HEK293 (cell line): ENCODE measurements at regions of chr7 and their contacts with region 1.

Region 1: GRCh38 chr7:28096713-28097112 is 83.9 kb downstream of the JAZF1 start:
- H3K4me3 ChIP-seq: no peak overlapping the region
- H3K27ac ChIP-seq: no peak overlapping the region
- H3K4me1 ChIP-seq: no peaks in the 10 kb centered on the region
- CTCF ChIP-seq: no peak

Region 2: DNA sequence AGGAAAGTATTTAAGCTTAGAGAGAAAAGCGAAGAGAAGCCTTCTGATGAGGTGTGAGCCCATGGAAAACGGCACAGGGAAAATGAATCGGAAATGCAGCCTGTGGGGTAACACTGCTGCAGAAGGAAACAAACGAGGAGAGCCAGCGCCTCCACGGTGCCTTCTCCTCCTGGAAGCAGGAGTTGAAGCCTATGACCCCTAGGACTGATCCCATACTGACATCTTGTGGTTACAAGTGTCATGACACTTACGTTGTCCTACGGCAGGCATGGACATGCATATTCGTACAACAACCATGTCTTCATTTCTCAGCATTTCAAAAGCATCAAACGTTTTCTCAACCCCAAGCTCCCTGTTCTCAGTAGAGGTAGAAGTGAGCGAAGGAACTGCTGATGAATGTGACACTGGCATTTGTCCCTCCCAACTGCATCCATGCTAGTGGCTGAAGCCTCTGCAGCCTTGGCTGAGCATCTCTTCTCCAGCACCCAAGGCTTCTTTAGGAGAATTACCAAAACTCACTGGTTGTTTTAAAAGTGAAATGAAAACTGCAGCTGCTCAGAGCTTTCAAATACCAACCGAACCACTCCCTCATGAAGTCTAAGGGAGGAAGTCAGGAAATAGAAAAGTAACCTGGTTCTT is 76.3 kb before region 1 on chr7:
- CTCF ChIA-PET with region 1: interaction called, 66 read pairs
- POLR2A ChIA-PET with region 1: no interaction called
- H3K4me3 ChIP-seq: no peak overlapping the region
- H3K27ac ChIP-seq: no peak overlapping the region
- H3K4me1 ChIP-seq: peaks cover 5% of the 10 kb centered on the region; the same call in 1 of the 2 replicates
- CTCF ChIP-seq: peak; percentile 91

Region 3: GRCh38 chr7:28052933-28053332 is 43.8 kb before region 1 on chr7:
- CTCF ChIA-PET with region 1: interaction called, 32 read pairs
- POLR2A ChIA-PET with region 1: interaction called, 3 read pairs
- H3K4me3 ChIP-seq: no peak overlapping the region
- H3K27ac ChIP-seq: no peak overlapping the region
- H3K4me1 ChIP-seq: no peaks in the 10 kb centered on the region
- CTCF ChIP-seq: no peak

Region 4: DNA sequence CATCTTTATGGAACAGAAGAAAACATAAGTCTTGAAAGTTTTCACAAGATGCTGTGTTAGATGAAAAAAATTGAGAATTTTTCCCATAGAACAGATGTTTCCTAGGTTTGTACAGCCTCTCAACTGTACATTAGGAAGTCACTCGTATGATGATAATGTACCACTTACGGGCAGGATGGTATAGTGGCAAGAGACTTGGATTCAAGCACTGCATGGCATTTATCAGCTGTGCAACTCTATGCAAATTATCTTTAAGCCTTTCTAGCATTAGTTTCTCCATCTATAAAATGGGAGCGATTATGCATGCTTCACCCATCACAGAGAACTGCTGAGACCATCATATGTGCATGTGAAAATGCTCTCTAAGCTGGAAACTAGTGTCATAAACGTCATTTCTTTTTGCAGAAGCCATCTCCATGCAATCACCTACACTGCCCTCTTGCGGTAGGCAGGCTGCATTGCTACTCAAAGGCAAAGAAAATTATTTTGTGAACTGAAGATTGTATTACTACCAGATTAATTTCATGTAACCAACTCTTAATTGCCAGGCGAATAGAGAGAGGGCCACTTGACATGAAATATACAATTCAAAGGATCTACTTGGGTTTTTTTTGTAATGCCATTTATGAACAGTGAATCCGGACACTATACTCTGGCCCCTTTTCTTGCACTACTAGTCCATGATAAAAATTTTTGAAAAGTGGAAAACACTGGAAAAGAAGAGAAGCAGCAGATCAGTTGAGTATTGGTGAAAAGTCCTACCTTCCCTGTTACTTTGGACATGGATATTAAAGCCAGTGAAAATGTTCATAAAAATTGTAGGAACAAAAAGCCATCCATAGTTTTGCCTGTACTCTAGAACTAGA is 18.4 kb before region 1 on chr7:
- CTCF ChIA-PET with region 1: interaction called, 50 read pairs
- POLR2A ChIA-PET with region 1: no interaction called
- H3K4me3 ChIP-seq: no peak overlapping the region
- H3K27ac ChIP-seq: no peak overlapping the region
- H3K4me1 ChIP-seq: peaks cover 7% of the 10 kb centered on the region; the same call in 1 of the 2 replicates
- CTCF ChIP-seq: peak; percentile 21; the same call in 1 of the 2 replicates